A549 (cell line): ENCODE measurements at regions of chr4 and their contacts with region 1.

Region 1: DNA sequence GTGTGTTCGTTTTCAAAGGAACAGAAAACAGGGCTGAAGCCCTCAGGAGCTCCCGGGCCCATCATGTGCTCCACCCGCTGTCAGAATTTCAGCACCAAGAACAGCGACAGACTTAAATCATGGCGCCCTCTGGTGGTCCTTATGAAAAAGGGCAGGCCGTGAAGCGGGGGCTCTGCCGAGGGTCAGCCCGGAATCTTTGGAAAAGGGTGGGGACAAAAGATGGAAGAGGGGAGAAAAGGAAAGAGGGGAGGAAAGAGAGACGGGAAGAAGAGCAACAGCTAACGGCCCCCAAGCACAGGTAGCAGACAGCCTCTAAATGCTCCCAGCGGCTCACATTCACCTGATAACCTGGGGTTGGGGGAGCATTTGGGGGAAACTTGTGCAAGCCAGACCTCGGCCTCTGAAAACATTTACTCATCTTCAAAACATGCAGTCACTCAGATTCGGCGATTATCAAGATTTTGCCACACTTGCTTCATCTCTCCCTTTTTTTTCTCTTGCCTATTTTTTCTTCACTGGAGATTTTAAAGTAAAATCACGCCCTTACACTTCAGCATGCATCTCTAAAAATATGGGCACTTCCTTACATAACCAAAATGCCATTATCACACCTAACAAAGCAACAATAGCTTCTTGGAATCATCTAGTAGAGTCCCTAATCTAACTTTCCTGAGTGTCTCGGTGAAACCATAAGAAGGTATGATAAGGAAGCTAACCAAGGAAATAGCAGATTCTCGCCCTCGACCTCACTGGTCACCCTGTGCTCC is 28.1 kb upstream of the MAN2B2 start:
- DNase-seq: peak; percentile 20 to 75
- ATAC-seq: peak in 1 of 2 experiments; percentile 78; a peak in 4 of 6 replicates
- H3K4me3 ChIP-seq: no peak overlapping the region
- H3K27ac ChIP-seq: no peak overlapping the region
- H3K4me1 ChIP-seq: no peaks in the 10 kb centered on the region
- CTCF ChIP-seq: peak; percentile 68
- EP300 ChIP-seq: no peak
- POLR2A ChIP-seq: no peak
- RAD21 ChIP-seq: peak; percentile 59 to 63

Region 2: DNA sequence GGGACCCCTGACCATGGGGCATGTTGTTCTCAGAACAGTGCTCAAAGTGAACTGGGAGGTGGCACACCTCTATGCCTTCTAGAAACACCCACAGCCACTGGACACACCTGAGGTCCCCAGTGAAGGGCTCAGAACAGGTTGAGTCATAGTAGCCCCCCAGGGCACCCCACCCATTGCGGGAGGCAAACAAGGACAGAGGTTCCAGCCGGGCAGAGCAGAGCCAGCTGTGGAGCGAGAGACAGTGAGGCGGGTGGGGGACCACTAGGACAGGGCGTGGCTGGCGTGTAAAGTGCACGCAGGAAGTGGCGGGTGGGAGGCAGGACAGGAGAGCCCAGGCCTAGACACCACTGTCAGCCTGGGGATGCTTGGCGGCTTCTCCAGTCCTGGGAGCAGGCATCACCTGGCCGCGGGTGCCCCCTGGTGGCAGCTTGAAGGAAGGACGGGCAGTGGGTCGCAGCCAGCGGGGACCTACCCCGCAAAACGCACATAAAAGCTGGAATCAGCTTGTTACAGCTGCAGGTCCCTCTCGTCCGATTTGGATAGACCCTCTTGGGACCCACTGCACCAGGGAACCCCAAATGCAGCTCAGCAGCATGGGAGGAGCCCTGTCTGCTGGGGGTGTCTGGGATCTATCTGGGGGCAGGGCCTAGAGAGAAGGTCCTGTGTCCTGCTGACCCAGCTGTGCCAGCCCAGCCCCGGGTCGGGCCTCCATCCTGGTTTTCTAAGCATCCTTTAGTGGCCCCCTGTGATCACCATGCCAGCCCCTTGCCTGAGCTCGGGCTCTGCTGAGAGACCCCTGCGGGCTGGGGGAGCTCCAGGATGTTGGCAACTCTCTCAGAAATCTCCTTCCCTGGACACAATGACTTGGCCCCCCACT is 219.6 kb before region 1 on chr4:
- CTCF ChIA-PET with region 1: interaction called, 28 read pairs
- POLR2A ChIA-PET with region 1: no interaction called
- DNase-seq: peak; percentile 49 to 65
- ATAC-seq: peak; percentile 60 to 89
- H3K4me3 ChIP-seq: no peak overlapping the region
- H3K27ac ChIP-seq: no peak overlapping the region
- H3K4me1 ChIP-seq: no peaks in the 10 kb centered on the region
- CTCF ChIP-seq: peak; percentile 72
- EP300 ChIP-seq: no peak
- POLR2A ChIP-seq: no peak
- RAD21 ChIP-seq: peak; percentile 82

Region 3: GRCh38 chr4:6523251-6523650 is 23.6 kb before region 1 on chr4:
- CTCF ChIA-PET with region 1: interaction called, 34 read pairs
- POLR2A ChIA-PET with region 1: no interaction called
- DNase-seq: peak in 1 of 2 experiments; percentile 11
- ATAC-seq: no peak
- H3K4me3 ChIP-seq: no peak overlapping the region
- H3K27ac ChIP-seq: no peak overlapping the region
- H3K4me1 ChIP-seq: no peaks in the 10 kb centered on the region
- CTCF ChIP-seq: no peak
- EP300 ChIP-seq: no peak
- POLR2A ChIP-seq: no peak
- RAD21 ChIP-seq: no peak

Region 4: GRCh38 chr4:6560416-6561172 is 13.7 kb after region 1 on chr4:
- CTCF ChIA-PET with region 1: interaction called, 27 read pairs
- POLR2A ChIA-PET with region 1: no interaction called
- DNase-seq: no peak
- ATAC-seq: 0 out of 6 replicates have a peak, but pooled peaks of 1 of the 2 experiments have one; percentile 8
- H3K4me3 ChIP-seq: no peak overlapping the region
- H3K27ac ChIP-seq: no peak overlapping the region
- H3K4me1 ChIP-seq: peaks cover 3% of the 10 kb centered on the region; the same call in 1 of the 3 replicates
- CTCF ChIP-seq: no peak
- EP300 ChIP-seq: no peak
- POLR2A ChIP-seq: no peak
- RAD21 ChIP-seq: no peak

Region 5: GRCh38 chr4:6640292-6641163 is 93.7 kb after region 1 on chr4 and contains the start of gene MRFAP1:
- CTCF ChIA-PET with region 1: interaction called, 13 read pairs
- POLR2A ChIA-PET with region 1: no interaction called
- DNase-seq: peak; percentile 80 to 95
- ATAC-seq: peak; percentile 93 to 94
- H3K4me3 ChIP-seq: peak within 1 kb of the TSS; percentile 62
- H3K27ac ChIP-seq: peak within 1 kb of the TSS; percentile 87 to 98
- H3K4me1 ChIP-seq: peaks cover 10% of the 10 kb centered on the region
- CTCF ChIP-seq: no peak
- EP300 ChIP-seq: no peak
- POLR2A ChIP-seq: peak; percentile 92
- RAD21 ChIP-seq: no peak
- polyA plus RNA-seq, gene MRFAP1: 185 and 272 TPM in 2 replicates